WTC11 (cell line): ENCODE measurements at regions of chr10 and their contacts with region 1.

Region 1: DNA sequence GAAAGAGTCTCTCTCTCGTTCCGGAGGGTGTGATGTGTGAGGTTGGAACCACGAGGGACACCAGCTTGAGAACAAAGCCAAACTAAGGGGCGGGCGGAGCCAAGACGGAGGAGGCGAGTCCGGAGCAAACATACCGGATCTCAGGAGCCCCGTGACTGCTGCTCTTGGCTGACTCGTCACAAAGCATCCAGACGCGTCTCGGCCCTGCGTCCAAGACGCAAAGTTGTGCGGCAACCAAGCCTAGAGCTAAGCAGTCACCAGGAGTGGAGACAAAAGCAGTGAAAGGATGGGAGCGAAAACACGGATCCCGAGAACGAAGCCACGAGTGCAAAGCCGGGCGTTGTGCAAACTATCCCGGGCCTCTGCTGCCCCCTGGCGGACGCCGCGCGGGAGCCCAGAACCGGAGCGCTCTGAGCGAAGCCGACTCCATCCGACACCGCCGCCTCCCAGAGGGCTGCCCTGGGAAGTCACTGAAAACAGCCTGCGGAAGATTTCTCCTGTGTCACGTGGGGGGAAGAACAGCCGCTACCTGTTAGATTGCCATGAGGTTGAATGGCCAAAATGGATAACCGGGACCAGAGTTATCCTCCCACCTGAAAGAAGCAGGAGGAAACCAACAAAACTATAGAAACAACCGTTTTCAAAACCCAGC is 46.4 kb upstream of the TMEM72 start:
- DNase-seq: peak; percentile 95
- ATAC-seq: peak; percentile 92
- H3K4me3 Mint-ChIP-seq: peak overlapping the region; percentile 83
- H3K27ac Mint-ChIP-seq: 0 out of 2 replicates have a peak overlapping the region, but pooled peaks have one; percentile 79
- H3K4me1 Mint-ChIP-seq: peaks cover 37% of the 10 kb centered on the region
- H3K27me3 Mint-ChIP-seq: peaks cover 57% of the 10 kb centered on the region
- CTCF ChIP-seq: peak; percentile 96

Region 2: GRCh38 chr10:43689955-43690771 is 1174.6 kb before region 1 on chr10:
- CTCF ChIA-PET with region 1: interaction called, 12 read pairs
- POLR2A ChIA-PET with region 1: no interaction called
- DNase-seq: peak; percentile 87
- ATAC-seq: peak; percentile 92
- H3K4me3 Mint-ChIP-seq: peak overlapping the region; percentile 80
- H3K27ac Mint-ChIP-seq: no peak overlapping the region
- H3K4me1 Mint-ChIP-seq: 0 out of 2 replicates have a peak, but pooled peaks cover 5% of the 10 kb centered on the region
- H3K27me3 Mint-ChIP-seq: peaks cover 66% of the 10 kb centered on the region
- CTCF ChIP-seq: peak; percentile 90

Region 3: GRCh38 chr10:44517635-44518034 is 347.1 kb before region 1 on chr10:
- CTCF ChIA-PET with region 1: interaction called, 11 read pairs
- POLR2A ChIA-PET with region 1: no interaction called
- DNase-seq: peak; percentile 68
- ATAC-seq: peak; percentile 99
- H3K4me3 Mint-ChIP-seq: no peak overlapping the region
- H3K27ac Mint-ChIP-seq: no peak overlapping the region
- H3K4me1 Mint-ChIP-seq: no peaks in the 10 kb centered on the region
- H3K27me3 Mint-ChIP-seq: no peaks in the 10 kb centered on the region
- CTCF ChIP-seq: peak; percentile 60

Region 4: DNA sequence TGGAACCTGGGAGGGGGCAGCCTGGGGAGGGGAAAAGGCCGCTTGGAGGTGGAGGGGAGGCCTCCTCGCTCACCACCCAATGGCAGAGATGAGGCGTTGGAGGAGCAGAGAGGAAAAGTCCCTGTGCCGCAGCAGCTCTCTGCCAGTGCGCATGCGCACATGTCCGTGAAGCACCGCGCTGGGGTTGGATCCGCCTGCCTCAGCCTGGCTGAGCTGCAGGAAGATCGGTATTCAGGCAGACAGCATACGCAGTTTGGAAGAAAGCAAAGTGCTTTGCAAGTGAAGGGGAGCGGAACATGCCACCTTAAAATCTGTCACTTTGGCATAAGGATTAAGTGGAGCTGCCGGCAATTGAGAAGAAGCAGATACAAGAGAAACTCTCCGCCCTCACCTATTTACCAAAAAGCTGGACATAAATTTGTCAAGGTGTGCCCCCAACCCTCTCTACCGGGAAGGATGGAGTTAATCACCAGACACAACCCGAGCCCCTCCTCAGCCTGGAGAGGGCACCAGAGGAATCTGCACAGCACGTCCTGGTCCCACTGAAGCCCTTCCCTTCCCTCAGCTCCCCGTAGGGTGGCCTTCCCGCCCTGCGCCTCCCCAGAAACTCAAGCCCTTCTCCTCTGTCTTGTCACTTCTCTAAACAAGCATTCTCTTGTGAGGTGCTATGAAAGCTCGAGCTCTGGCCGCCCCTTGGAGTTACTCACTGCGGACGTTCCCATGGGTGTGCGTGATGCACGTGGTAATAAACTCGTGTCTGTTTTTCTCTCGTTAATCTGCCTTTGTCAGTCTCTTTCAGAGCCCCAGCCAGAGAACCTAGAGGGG is 14.2 kb after region 1 on chr10:
- CTCF ChIA-PET with region 1: interaction called, 34 read pairs
- POLR2A ChIA-PET with region 1: no interaction called
- DNase-seq: peak; percentile 91
- ATAC-seq: peak; percentile 93
- H3K4me3 Mint-ChIP-seq: peak overlapping the region; percentile 72
- H3K27ac Mint-ChIP-seq: peak overlapping the region; percentile 94; the same call in 1 of the 2 replicates
- H3K4me1 Mint-ChIP-seq: peaks cover 26% of the 10 kb centered on the region
- H3K27me3 Mint-ChIP-seq: peaks cover 23% of the 10 kb centered on the region
- CTCF ChIP-seq: no peak

Region 5: DNA sequence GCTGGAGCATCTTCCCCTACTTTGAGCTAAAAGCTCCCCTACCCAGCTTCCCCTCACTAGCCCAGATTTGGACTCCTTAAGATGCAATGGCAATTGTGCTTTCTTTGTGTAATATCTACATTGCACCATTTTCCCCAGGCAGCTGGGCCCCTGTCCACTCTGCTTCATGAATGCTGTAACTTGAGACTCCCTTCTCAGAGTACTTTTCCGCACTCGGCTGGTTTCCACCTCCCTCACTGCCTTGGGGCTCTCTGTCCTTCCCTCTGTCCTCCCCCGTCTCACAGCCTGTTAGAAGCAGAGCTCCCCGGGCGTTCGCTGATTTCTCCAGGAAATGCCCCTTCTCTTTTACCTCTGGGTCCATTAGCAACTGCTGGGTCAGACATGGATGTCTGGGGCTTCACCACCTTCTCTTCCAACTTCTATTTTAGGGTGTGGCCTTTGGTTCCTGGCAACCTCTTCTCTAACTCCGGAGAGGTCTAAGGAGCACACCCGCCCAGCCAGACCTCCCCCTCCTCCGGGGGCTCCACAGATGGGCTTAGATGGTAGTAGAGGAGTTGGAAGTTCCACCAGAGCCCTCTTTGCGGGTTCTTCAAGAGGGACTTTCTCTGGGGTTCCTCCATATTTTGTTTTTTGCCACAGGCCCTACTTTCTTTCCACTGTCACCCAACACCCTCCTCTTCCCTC is 43.4 kb after region 1 on chr10:
- CTCF ChIA-PET with region 1: interaction called, 12 read pairs
- POLR2A ChIA-PET with region 1: no interaction called
- DNase-seq: peak; percentile 35
- ATAC-seq: peak; percentile 58
- H3K4me3 Mint-ChIP-seq: no peak overlapping the region
- H3K27ac Mint-ChIP-seq: no peak overlapping the region
- H3K4me1 Mint-ChIP-seq: peaks cover 38% of the 10 kb centered on the region
- H3K27me3 Mint-ChIP-seq: no peaks in the 10 kb centered on the region; the same call in 1 of the 2 replicates
- CTCF ChIP-seq: no peak

Region 6: GRCh38 chr10:44925224-44925623 is 60.5 kb after region 1 on chr10:
- CTCF ChIA-PET with region 1: interaction called, 54 read pairs
- POLR2A ChIA-PET with region 1: no interaction called
- DNase-seq: peak; percentile 79
- ATAC-seq: peak; percentile 90
- H3K4me3 Mint-ChIP-seq: no peak overlapping the region
- H3K27ac Mint-ChIP-seq: no peak overlapping the region
- H3K4me1 Mint-ChIP-seq: no peaks in the 10 kb centered on the region
- H3K27me3 Mint-ChIP-seq: peaks cover 10% of the 10 kb centered on the region
- CTCF ChIP-seq: peak; percentile 26

Region 7: DNA sequence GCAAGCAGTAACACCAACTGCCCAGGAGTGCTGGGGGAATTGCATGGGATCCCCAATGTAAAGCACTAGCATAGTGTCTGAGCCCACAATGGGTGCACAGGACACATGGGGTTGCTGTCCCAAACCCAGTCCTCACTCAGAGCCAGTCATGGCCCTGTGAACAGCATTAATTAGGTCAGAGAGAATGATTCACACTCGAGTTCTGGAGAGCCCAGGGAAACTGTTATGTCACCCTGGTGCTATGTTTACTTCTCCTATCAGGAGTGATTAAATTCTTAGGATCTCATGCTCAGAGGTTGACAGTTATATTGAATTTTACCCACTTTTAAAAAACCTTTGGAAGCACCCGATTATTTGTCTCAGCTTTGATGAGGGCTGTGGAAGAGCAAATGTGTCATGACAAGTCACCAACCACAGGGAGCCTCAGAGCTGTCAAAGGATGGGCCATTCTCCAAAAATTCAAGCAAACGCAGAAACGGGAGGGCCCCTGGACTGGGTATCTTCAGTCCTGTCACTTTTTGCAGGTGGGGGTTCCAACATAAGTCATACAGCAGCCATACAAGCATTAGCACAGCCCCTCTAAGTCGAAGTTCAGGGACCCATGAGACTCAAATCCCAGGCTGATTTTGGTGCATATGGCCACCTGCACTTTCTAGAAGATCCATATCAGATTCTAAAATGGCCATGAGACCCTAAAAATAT is 93.6 kb after region 1 on chr10:
- CTCF ChIA-PET with region 1: no interaction called
- POLR2A ChIA-PET with region 1: no interaction called
- DNase-seq: no peak
- ATAC-seq: no peak
- H3K4me3 Mint-ChIP-seq: peak overlapping the region; percentile 81
- H3K27ac Mint-ChIP-seq: no peak overlapping the region
- H3K4me1 Mint-ChIP-seq: peaks cover 48% of the 10 kb centered on the region
- H3K27me3 Mint-ChIP-seq: peaks cover 10% of the 10 kb centered on the region
- CTCF ChIP-seq: no peak